ENCODE measurements at regions of chr10 and their contacts with region 1.

Region 1: GRCh38 chr10:27155066-27155754 is at the start of gene MASTL:
- DNase-seq: peak; percentile 94
- H3K4me3 ChIP-seq: peak within 1 kb of the TSS; percentile 96
- H3K27ac ChIP-seq: peak within 1 kb of the TSS; percentile 96
- H3K4me1 ChIP-seq: peaks cover 34% of the 10 kb centered on the region
- CTCF ChIP-seq: no peak
- total RNA-seq, gene MASTL: 42.2 and 44.0 TPM in 2 replicates

Region 2: DNA sequence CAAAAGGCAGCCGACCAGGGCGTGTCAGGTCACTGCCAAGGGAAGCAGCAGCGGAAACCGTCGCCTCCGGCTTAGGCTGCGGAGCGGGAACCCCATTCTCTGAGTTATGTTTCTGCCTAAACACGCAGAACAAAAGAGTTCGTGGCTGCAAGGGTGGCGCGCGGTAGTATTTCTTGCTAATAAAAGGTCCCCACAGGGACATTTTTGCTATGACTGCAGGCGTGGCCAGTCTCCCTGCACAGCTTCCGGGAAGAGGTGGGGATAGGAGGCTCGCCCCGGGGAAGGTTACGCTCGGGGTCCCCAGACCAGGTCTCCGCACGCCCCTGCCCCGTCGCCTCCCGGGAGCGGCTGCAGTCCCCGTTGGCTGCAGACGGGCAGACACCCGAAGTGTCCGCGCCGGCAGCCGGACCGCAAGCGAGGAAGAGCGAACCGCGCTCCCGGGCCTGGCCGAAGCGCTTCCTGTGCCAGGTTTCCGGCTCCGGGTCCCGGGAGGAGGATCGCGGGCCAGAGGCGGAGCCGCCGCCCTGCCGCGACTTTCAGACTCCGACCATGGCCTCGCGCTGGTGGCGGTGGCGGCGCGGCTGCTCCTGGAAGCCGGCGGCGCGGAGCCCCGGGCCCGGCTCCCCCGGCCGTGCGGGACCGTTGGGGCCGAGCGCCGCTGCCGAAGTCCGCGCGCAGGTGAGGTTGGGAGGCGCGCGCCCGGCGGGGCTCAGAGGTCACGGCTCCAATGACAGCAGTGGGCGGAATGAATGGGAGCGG is 457.9 kb before region 1 on chr10 and contains the start of gene PDSS1:
- CTCF ChIA-PET with region 1: no interaction called
- POLR2A ChIA-PET with region 1: no interaction called
- intact Hi-C with region 1: loop called (anchors 10 kb)
- DNase-seq: peak; percentile 79
- H3K4me3 ChIP-seq: peak within 1 kb of the TSS; percentile 78
- H3K27ac ChIP-seq: peak within 1 kb of the TSS; percentile 79
- H3K4me1 ChIP-seq: peaks cover 14% of the 10 kb centered on the region
- CTCF ChIP-seq: no peak
- total RNA-seq, gene PDSS1: 16.9 and 23.0 TPM in 2 replicates

Region 3: GRCh38 chr10:27099916-27100812 is 55.0 kb before region 1 on chr10 and contains the start of gene ANKRD26:
- CTCF ChIA-PET with region 1: interaction called, 3 read pairs
- POLR2A ChIA-PET with region 1: interaction called, 6 read pairs
- intact Hi-C with region 1: loop called (anchors 5 kb)
- DNase-seq: peak; percentile 99
- H3K4me3 ChIP-seq: peak within 1 kb of the TSS; percentile 70
- H3K27ac ChIP-seq: peak within 1 kb of the TSS; percentile 52
- H3K4me1 ChIP-seq: peaks cover 16% of the 10 kb centered on the region
- CTCF ChIP-seq: peak; percentile 35; the same call in 1 of the 2 replicates
- total RNA-seq, gene ANKRD26: 8.6 and 9.1 TPM in 2 replicates

Measured in OCI-LY7 (cell line).